Sigmoid colon (tissue), 7 donors: ENCODE measurements at regions of chr15 and their contacts with region 1.

Region 1: GRCh38 chr15:70318594-70319465 is 221.1 kb upstream of the TLE3 start:
- DNase-seq: peak; percentile 94
- H3K4me3 ChIP-seq: no peak overlapping the region
- H3K27ac ChIP-seq: peak overlapping the region; percentile 42 to 91 (median 86)
- H3K4me1 ChIP-seq: peaks cover 0 to 64% (median 58%) of the 10 kb centered on the region in 4 donors
- H3K27me3 ChIP-seq: no peaks in the 10 kb centered on the region
- CTCF ChIP-seq: no peak
- EP300 ChIP-seq: peak; percentile 9 to 76 (median 48)
- POLR2A ChIP-seq: no peak

Region 2: GRCh38 chr15:70047386-70048197 is 271.2 kb before region 1 on chr15:
- intact Hi-C with region 1: no loop called
- DNase-seq: peak; percentile 76
- H3K4me3 ChIP-seq: no peak overlapping the region
- H3K27ac ChIP-seq: peak overlapping the region in 2 of 4 donors; percentile 30 to 49
- H3K4me1 ChIP-seq: peaks cover 0 to 37% (median 21%) of the 10 kb centered on the region in 4 donors
- H3K27me3 ChIP-seq: no peaks in the 10 kb centered on the region
- CTCF ChIP-seq: no peak
- EP300 ChIP-seq: no peak
- POLR2A ChIP-seq: no peak

Region 3: GRCh38 chr15:70152070-70152480 is 166.8 kb before region 1 on chr15:
- intact Hi-C with region 1: loop called (anchors 5 kb)
- DNase-seq: peak; percentile 76
- H3K4me3 ChIP-seq: no peak overlapping the region
- H3K27ac ChIP-seq: peak overlapping the region in 3 of 4 donors; percentile 80 to 87 (median 86)
- H3K4me1 ChIP-seq: peaks cover 0 to 86% (median 56%) of the 10 kb centered on the region in 4 donors
- H3K27me3 ChIP-seq: no peaks in the 10 kb centered on the region
- CTCF ChIP-seq: no peak
- EP300 ChIP-seq: no peak
- POLR2A ChIP-seq: no peak

Region 4: GRCh38 chr15:70196314-70197291 is 122.2 kb before region 1 on chr15:
- intact Hi-C with region 1: loop called (anchors 5 kb)
- DNase-seq: peak; percentile 80
- H3K4me3 ChIP-seq: no peak overlapping the region
- H3K27ac ChIP-seq: peak overlapping the region; percentile 31 to 85 (median 80)
- H3K4me1 ChIP-seq: peaks cover 0 to 48% (median 39%) of the 10 kb centered on the region in 4 donors
- H3K27me3 ChIP-seq: no peaks in the 10 kb centered on the region
- CTCF ChIP-seq: no peak
- EP300 ChIP-seq: no peak
- POLR2A ChIP-seq: no peak

Region 5: DNA sequence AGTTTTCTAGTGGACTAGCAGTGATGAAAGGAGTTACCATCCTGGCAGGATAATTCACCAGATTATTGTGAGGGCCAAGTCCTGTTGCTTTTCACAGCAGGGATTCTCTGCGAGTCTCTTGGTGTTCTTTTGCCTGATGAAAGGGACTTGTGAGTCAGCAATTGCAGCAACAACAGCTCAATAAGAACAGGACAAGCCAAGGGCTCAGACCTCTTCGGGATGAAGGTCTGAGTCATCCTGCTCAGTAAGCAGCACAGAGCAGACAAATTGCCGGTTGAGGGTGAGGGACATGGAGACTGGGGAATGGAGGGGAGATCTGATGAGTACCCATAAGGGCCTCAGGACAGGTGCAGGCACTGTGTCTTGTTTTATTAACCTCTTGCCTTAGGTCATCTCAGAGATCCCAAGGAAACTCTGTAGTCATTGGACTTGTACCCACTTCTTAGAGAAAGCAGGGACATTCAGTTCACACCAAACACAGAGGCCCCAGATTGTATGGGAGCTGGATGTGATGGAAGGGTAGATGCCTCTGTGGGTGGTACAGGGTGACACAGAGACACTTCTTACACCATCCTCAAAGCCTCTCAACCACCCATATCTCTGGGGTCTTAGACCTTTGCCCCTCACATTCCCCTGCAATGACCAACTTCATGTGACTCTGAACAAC is 47.3 kb before region 1 on chr15:
- intact Hi-C with region 1: loop called (anchors 5 kb)
- DNase-seq: peak; percentile 89
- H3K4me3 ChIP-seq: no peak overlapping the region
- H3K27ac ChIP-seq: peak overlapping the region; percentile 55 to 82 (median 66)
- H3K4me1 ChIP-seq: peaks cover 0 to 52% (median 44%) of the 10 kb centered on the region in 4 donors
- H3K27me3 ChIP-seq: no peaks in the 10 kb centered on the region
- CTCF ChIP-seq: no peak
- EP300 ChIP-seq: no peak
- POLR2A ChIP-seq: no peak

Region 6: DNA sequence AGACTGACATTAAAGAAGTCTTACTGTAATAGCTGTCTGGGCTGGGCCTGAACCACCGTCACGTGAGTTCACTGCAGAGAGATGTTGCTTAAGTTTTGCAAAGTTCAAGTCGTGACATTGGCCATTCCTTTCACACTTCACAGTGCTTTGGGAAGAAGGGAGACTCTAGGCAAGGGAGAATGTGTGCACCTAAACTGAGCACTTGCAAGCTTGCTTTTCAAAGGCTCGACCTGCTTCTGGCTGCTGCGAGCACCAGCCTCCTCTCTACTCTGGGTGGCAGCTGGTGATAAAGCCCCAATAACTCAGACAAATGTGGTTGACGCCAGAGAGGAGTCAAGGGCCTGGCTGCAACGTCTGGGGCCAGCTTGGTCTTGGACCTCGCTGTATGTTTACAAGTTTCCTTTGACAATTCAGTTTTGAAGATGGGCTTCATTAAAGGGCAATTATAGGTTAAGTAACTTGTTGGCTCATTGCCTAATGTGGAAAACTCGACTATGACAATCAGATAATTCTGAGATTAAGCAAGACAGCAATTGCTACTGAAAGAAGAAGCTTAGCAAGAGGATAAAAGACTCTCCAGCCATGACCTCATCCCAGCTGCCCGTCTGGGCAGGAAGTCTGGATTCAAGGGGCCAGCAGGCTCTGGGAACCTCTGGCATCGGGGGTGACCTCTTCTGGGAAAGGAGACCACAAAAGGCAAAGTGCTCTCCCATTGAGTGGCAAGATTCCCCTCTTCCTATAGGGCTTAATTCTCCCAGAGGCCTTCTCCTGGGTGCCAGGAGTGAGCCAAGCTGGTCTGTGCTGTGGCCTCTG is 21.1 kb after region 1 on chr15:
- intact Hi-C with region 1: loop called (anchors 2 kb)
- DNase-seq: no peak
- H3K4me3 ChIP-seq: no peak overlapping the region
- H3K27ac ChIP-seq: peak overlapping the region in 3 of 4 donors; percentile 74 to 78 (median 78)
- H3K4me1 ChIP-seq: peaks cover 0 to 36% (median 27%) of the 10 kb centered on the region in 4 donors
- H3K27me3 ChIP-seq: no peaks in the 10 kb centered on the region
- CTCF ChIP-seq: no peak
- EP300 ChIP-seq: no peak
- POLR2A ChIP-seq: no peak

Region 7: GRCh38 chr15:70617076-70617910 is 298.5 kb after region 1 on chr15:
- intact Hi-C with region 1: no loop called
- DNase-seq: no peak
- H3K4me3 ChIP-seq: no peak overlapping the region
- H3K27ac ChIP-seq: no peak overlapping the region
- H3K4me1 ChIP-seq: peaks cover 0 to 13% (median 9%) of the 10 kb centered on the region in 4 donors
- H3K27me3 ChIP-seq: no peaks in the 10 kb centered on the region
- CTCF ChIP-seq: no peak
- EP300 ChIP-seq: no peak
- POLR2A ChIP-seq: no peak